ENCODE measurements at regions of chr17 and their contacts with region 1.

Region 1: GRCh38 chr17:57783106-57783742 is 38.1 kb upstream of the CCDC182 start:
- DNase-seq: peak; percentile 96

Region 2: DNA sequence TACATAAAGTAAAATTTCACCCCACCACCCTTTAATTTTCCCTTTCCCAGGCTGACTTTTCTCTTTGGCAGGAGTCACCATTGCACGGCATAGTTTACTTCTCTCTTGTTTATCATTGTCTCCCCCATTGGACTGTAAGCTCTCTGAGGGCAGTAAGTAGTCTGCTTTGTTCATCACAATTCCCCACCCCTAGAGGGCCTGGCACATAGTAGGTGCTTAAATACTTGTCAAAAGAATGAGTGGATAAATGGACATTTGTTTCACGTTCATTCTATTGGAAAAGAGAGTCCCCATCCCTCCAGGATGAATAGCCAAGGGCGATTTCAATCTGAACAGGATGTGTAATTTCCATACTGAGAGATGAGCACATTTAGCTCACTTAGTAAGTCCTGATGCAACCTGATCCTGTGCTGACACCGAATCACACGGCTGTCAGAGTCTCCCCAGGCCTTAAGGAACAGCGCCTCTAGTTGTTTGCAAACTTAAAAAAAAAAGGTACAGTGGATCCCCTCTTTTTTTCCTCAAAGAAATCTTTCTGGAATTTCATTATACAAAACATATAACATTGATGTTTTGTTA is 644.2 kb before region 1 on chr17:
- CTCF ChIA-PET with region 1: interaction called, 10 read pairs
- POLR2A ChIA-PET with region 1: no interaction called
- DNase-seq: no peak

Region 3: GRCh38 chr17:57766318-57766943 is 16.8 kb before region 1 on chr17:
- CTCF ChIA-PET with region 1: interaction called, 15 read pairs
- POLR2A ChIA-PET with region 1: interaction called, 3 read pairs
- DNase-seq: no peak

Region 4: DNA sequence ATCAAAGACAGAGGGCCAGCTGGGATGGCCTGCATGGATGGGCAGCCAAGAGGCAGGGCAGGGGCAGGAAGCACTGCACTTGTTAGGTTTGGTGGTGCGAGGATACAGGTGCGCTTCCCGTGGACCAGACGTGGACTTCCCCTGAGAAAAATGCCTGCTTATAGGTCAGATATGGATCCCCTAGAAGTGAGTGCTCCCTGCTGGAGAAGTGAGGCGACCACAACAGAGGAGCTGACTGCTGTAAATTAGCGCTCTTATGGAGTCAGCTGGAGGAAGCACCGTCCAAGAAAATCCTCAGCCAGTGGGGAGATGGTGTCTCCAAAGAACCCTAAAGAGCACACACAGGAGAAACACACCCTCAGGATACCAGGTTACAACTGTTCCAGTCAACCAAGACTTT is 10.4 kb before region 1 on chr17:
- CTCF ChIA-PET with region 1: interaction called, 15 read pairs
- POLR2A ChIA-PET with region 1: no interaction called
- DNase-seq: no peak

Region 5: GRCh38 chr17:57833179-57833939 is 50.1 kb after region 1 on chr17:
- CTCF ChIA-PET with region 1: interaction called, 19 read pairs
- POLR2A ChIA-PET with region 1: no interaction called
- DNase-seq: peak; percentile 72

Region 6: GRCh38 chr17:57902800-57903759 is 119.9 kb after region 1 on chr17:
- CTCF ChIA-PET with region 1: no interaction called
- POLR2A ChIA-PET with region 1: no interaction called
- DNase-seq: no peak

Measured in HEK293T (cell line).